T-cell (primary cell): ENCODE measurements at regions of chr7 and their contacts with region 1.

Region 1: GRCh38 chr7:8094164-8095140 is 125.9 kb downstream of the GLCCI1 start:
- DNase-seq: no peak
- ATAC-seq: no peak
- H3K4me3 ChIP-seq: no peak overlapping the region
- H3K4me3 Mint-ChIP-seq: no peak overlapping the region
- H3K27ac ChIP-seq: no peak overlapping the region
- H3K27ac Mint-ChIP-seq: no peak overlapping the region
- H3K4me1 ChIP-seq: no peaks in the 10 kb centered on the region
- H3K4me1 Mint-ChIP-seq: peaks cover 0 to 11% (median 0%) of the 10 kb centered on the region in 3 donors
- H3K27me3 ChIP-seq: no peaks in the 10 kb centered on the region
- H3K27me3 Mint-ChIP-seq: no peaks in the 10 kb centered on the region

Region 2: GRCh38 chr7:7869036-7869435 is 225.4 kb before region 1 on chr7:
- CTCF ChIA-PET with region 1: no interaction called
- POLR2A ChIA-PET with region 1: interaction called in 1 of 2 experiments, 11 read pairs
- DNase-seq: no peak
- ATAC-seq: no peak
- H3K4me3 ChIP-seq: no peak overlapping the region
- H3K4me3 Mint-ChIP-seq: no peak overlapping the region
- H3K27ac ChIP-seq: no peak overlapping the region
- H3K27ac Mint-ChIP-seq: no peak overlapping the region
- H3K4me1 ChIP-seq: peaks cover 0 to 4% of the 10 kb centered on the region in 2 experiments
- H3K4me1 Mint-ChIP-seq: no peaks in the 10 kb centered on the region
- H3K27me3 ChIP-seq: no peaks in the 10 kb centered on the region
- H3K27me3 Mint-ChIP-seq: no peaks in the 10 kb centered on the region

Region 3: GRCh38 chr7:7959979-7960670 is 134.3 kb before region 1 on chr7:
- CTCF ChIA-PET with region 1: no interaction called
- POLR2A ChIA-PET with region 1: no interaction called
- DNase-seq: no peak
- ATAC-seq: no peak
- H3K4me3 ChIP-seq: no peak overlapping the region
- H3K4me3 Mint-ChIP-seq: no peak overlapping the region
- H3K27ac ChIP-seq: no peak overlapping the region
- H3K27ac Mint-ChIP-seq: no peak overlapping the region
- H3K4me1 ChIP-seq: peaks cover under 1 to 7% of the 10 kb centered on the region in 2 experiments
- H3K4me1 Mint-ChIP-seq: peaks cover 5 to 8% (median 6%) of the 10 kb centered on the region in 3 donors
- H3K27me3 ChIP-seq: no peaks in the 10 kb centered on the region
- H3K27me3 Mint-ChIP-seq: no peaks in the 10 kb centered on the region

Region 4: GRCh38 chr7:8035647-8036518 is 58.6 kb before region 1 on chr7:
- CTCF ChIA-PET with region 1: no interaction called
- POLR2A ChIA-PET with region 1: no interaction called
- DNase-seq: peak in 4 of 35 experiments; percentile 2 to 62 (median 8)
- ATAC-seq: peak; percentile 85 to 93 (median 90)
- H3K4me3 ChIP-seq: no peak overlapping the region
- H3K4me3 Mint-ChIP-seq: no peak overlapping the region
- H3K27ac ChIP-seq: no peak overlapping the region
- H3K27ac Mint-ChIP-seq: peak overlapping the region; percentile 76 to 80
- H3K4me1 ChIP-seq: peaks cover 0 to 12% of the 10 kb centered on the region in 2 experiments
- H3K4me1 Mint-ChIP-seq: peaks cover 13 to 32% (median 24%) of the 10 kb centered on the region in 3 donors
- H3K27me3 ChIP-seq: no peaks in the 10 kb centered on the region
- H3K27me3 Mint-ChIP-seq: no peaks in the 10 kb centered on the region